ENCODE measurements at regions of chr7 and their contacts with region 1.

Region 1: DNA sequence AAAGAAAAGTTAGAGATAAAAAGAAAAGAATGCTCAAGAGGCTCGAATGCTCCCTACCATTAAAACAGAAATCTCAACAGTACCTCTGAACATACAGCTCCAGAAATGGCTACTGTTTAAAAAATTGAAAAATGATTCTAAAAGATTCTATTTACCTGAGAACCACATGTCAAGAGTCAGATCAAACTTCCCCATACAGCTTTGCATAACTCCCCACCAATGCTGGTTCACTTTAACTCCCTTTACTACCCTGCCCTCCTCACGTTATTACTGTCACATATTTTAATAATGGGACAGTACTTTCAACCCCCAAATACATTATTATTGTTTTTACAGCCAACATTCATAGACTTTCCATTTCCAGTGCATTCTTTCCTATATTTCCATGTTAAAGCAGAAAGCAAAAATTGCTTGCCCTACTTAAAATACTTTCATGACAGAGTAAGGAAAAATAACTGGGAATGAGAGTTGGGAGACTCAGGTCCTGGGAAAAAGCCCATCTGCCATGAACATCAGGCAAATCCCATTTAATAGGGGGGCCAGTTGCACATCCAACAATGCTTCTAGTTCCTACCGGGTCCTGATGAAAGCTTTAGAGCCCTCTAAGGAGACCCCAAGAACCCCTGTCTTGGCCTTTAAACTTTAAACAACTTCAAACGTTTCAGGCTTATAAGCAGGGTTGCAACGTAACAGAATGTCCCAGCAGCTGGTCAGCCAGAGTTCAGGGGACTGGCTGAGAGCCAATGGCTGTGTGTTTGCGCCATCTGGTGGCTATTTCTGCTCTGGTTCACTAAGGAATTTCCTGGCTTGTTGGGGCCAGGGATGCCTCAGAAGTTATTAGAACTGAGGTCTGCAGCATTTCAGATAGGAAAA is 247.4 kb downstream of the ELMO1 start:
- DNase-seq: peak; percentile 65
- CTCF ChIP-seq: peak; percentile 88

Region 2: DNA sequence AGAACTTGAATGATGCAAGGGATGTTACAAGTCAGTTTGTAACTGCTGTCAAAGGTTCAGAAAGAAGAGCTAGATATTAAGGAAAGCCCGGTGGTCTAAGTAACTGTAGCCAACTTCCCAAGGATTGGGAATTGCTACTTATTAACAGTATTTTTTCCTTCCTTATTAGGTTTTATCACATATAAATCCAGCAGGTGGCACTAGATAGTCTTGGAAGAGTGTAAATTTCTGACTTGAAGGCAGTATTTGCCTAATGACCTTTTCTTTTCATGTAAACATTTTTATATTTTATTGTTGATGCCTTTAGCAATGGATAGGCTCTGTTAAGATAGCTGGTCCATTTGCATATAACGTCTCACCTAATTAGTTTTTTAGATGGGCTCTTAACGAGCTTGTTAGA is 760.4 kb before region 1 on chr7:
- CTCF ChIA-PET with region 1: interaction called, 57 read pairs
- POLR2A ChIA-PET with region 1: interaction called, 3 read pairs
- DNase-seq: no peak
- CTCF ChIP-seq: no peak

Region 3: GRCh38 chr7:36487756-36488336 is 713.4 kb before region 1 on chr7:
- CTCF ChIA-PET with region 1: interaction called, 83 read pairs
- POLR2A ChIA-PET with region 1: no interaction called
- DNase-seq: peak; percentile 37
- CTCF ChIP-seq: peak; percentile 48

Region 4: GRCh38 chr7:36958111-36958733 is 243.0 kb before region 1 on chr7:
- CTCF ChIA-PET with region 1: interaction called, 12 read pairs
- POLR2A ChIA-PET with region 1: no interaction called
- DNase-seq: no peak
- CTCF ChIP-seq: no peak

Region 5: GRCh38 chr7:36986429-36987362 is 214.5 kb before region 1 on chr7:
- CTCF ChIA-PET with region 1: interaction called, 46 read pairs
- POLR2A ChIA-PET with region 1: no interaction called
- DNase-seq: peak; percentile 75
- CTCF ChIP-seq: peak; percentile 67